ENCODE measurements at regions of chr10 and their contacts with region 1.

Region 1: DNA sequence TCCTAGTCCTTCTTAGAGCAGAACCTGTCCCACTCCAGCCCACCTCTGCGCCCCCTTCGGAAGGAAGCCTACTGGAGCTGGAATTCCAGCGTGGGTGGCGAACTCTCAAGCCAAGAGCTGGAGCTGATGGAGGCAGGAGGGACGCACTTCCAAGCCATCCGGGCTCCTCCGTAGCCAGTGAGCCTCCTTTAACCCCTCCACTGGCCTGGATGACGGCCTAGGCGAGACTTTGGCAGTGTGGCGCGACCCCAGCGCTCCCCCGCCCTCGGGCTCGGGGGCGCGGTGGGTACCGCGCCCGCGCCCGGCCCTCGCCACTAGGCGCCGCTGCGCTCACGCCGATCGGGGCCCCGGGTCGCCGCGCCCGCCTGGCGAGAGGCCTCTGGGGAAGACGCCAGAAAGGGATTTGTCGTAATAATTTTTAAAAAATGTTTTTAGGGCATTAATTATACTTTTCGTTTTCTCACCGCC is 5.1 kb upstream of the EMX2 start:
- DNase-seq: peak; percentile 33
- ATAC-seq: peak; percentile 61
- H3K4me3 ChIP-seq: no peak overlapping the region
- H3K27ac ChIP-seq: no peak overlapping the region
- H3K4me1 ChIP-seq: 0 out of 2 replicates have a peak, but pooled peaks cover 6% of the 10 kb centered on the region
- H3K27me3 ChIP-seq: peaks cover 47% of the 10 kb centered on the region
- CTCF ChIP-seq: peak; percentile 74

Region 2: DNA sequence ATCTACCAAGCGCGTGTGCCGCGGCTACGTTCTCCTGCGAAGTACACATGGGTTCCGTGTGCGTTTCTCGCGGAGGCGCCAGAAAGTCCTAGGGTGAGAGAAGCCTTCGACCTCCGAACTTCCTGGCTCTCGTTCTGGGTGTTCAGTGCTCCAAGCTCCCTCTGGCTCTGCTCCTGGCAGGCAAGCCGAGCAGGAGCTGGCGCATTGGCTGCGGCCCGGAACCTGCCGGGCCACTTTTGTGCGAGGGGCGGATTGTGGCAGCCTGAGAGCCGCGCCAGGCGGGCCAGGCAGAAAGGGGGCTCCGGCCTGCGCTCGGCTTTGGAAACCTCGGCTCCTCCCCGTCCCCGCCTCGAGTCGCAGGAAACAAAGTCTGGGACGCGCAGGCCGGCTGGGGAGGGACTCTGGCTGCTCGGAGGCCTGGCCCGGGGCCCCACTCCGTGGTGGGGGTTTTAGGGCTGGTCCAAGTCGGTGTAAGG is 14.7 kb after region 1 on chr10:
- CTCF ChIA-PET with region 1: no interaction called
- POLR2A ChIA-PET with region 1: no interaction called
- intact Hi-C with region 1: no loop called
- DNase-seq: peak; percentile 9
- ATAC-seq: no peak
- H3K4me3 ChIP-seq: no peak overlapping the region
- H3K27ac ChIP-seq: no peak overlapping the region
- H3K4me1 ChIP-seq: no peaks in the 10 kb centered on the region
- H3K27me3 ChIP-seq: peaks cover 57% of the 10 kb centered on the region
- CTCF ChIP-seq: no peak

Region 3: GRCh38 chr10:118106426-118106825 is 569.0 kb after region 1 on chr10:
- CTCF ChIA-PET with region 1: no interaction called
- POLR2A ChIA-PET with region 1: no interaction called
- intact Hi-C with region 1: loop called (anchors 2 kb)
- DNase-seq: peak; percentile 40
- ATAC-seq: peak; percentile 40; the same call in 1 of the 2 replicates
- H3K4me3 ChIP-seq: no peak overlapping the region
- H3K27ac ChIP-seq: no peak overlapping the region
- H3K4me1 ChIP-seq: no peaks in the 10 kb centered on the region
- H3K27me3 ChIP-seq: 0 out of 2 replicates have a peak, but pooled peaks cover 5% of the 10 kb centered on the region
- CTCF ChIP-seq: peak; percentile 59

Region 4: GRCh38 chr10:118241229-118242137 is 704.0 kb after region 1 on chr10:
- CTCF ChIA-PET with region 1: no interaction called
- POLR2A ChIA-PET with region 1: no interaction called
- intact Hi-C with region 1: loop called (anchors 2 kb)
- DNase-seq: peak; percentile 83
- ATAC-seq: peak; percentile 74
- H3K4me3 ChIP-seq: 0 out of 2 replicates have a peak overlapping the region, but pooled peaks have one; percentile 7
- H3K27ac ChIP-seq: no peak overlapping the region
- H3K4me1 ChIP-seq: peaks cover 3% of the 10 kb centered on the region; the same call in 1 of the 2 replicates
- H3K27me3 ChIP-seq: peaks cover 71% of the 10 kb centered on the region
- CTCF ChIP-seq: peak; percentile 88